CD4-positive, alpha-beta T cell (primary cell): ENCODE measurements at regions of chr1 and their contacts with region 1.

Region 1: GRCh38 chr1:44721485-44722361 is 9.2 kb downstream of the RNU5D-1 start:
- DNase-seq: peak; percentile 16 to 93 (median 48)
- ATAC-seq: peak; percentile 75
- H3K4me3 ChIP-seq: peak overlapping the region; percentile 6
- H3K4me3 Mint-ChIP-seq: peak overlapping the region; percentile 84
- H3K27ac ChIP-seq: peak overlapping the region; percentile 30 to 76
- H3K27ac Mint-ChIP-seq: peak overlapping the region; percentile 90
- H3K4me1 ChIP-seq: peaks cover 77% of the 10 kb centered on the region
- H3K4me1 Mint-ChIP-seq: peaks cover 68% of the 10 kb centered on the region
- H3K27me3 ChIP-seq: no peaks in the 10 kb centered on the region
- H3K27me3 Mint-ChIP-seq: no peaks in the 10 kb centered on the region
- CTCF ChIP-seq: no peak

Region 2: GRCh38 chr1:44696789-44697345 is 24.9 kb before region 1 on chr1:
- CTCF ChIA-PET with region 1: no interaction called
- POLR2A ChIA-PET with region 1: interaction called, 14 read pairs
- intact Hi-C with region 1: no loop called
- DNase-seq: peak in 12 of 14 experiments; percentile 8 to 65 (median 36)
- ATAC-seq: peak; percentile 98
- H3K4me3 ChIP-seq: peak overlapping the region; percentile 5
- H3K4me3 Mint-ChIP-seq: peak overlapping the region; percentile 70
- H3K27ac ChIP-seq: peak overlapping the region; percentile 36 to 74
- H3K27ac Mint-ChIP-seq: peak overlapping the region; percentile 84
- H3K4me1 ChIP-seq: peaks cover 16% of the 10 kb centered on the region
- H3K4me1 Mint-ChIP-seq: peaks cover 14% of the 10 kb centered on the region
- H3K27me3 ChIP-seq: no peaks in the 10 kb centered on the region
- H3K27me3 Mint-ChIP-seq: no peaks in the 10 kb centered on the region
- CTCF ChIP-seq: no peak

Region 3: GRCh38 chr1:44786138-44786840 is 64.6 kb after region 1 on chr1:
- CTCF ChIA-PET with region 1: interaction called, 3 read pairs
- POLR2A ChIA-PET with region 1: interaction called, 18 read pairs
- intact Hi-C with region 1: no loop called
- DNase-seq: peak; percentile 64 to 89 (median 74)
- ATAC-seq: peak; percentile 84
- H3K4me3 ChIP-seq: peak overlapping the region; percentile 58
- H3K4me3 Mint-ChIP-seq: peak overlapping the region; percentile 86
- H3K27ac ChIP-seq: peak overlapping the region; percentile 4 to 37
- H3K27ac Mint-ChIP-seq: peak overlapping the region; percentile 53
- H3K4me1 ChIP-seq: peaks cover 35% of the 10 kb centered on the region
- H3K4me1 Mint-ChIP-seq: peaks cover 31% of the 10 kb centered on the region
- H3K27me3 ChIP-seq: no peaks in the 10 kb centered on the region
- H3K27me3 Mint-ChIP-seq: no peaks in the 10 kb centered on the region
- CTCF ChIP-seq: peak; percentile 99

Region 4: GRCh38 chr1:44807262-44808062 is 85.7 kb after region 1 on chr1 and contains the start of gene DYNLT4:
- CTCF ChIA-PET with region 1: interaction called, 3 read pairs
- POLR2A ChIA-PET with region 1: interaction called, 65 read pairs
- intact Hi-C with region 1: no loop called
- DNase-seq: peak; percentile 82 to 98 (median 94)
- ATAC-seq: peak; percentile 56
- H3K4me3 ChIP-seq: peak within 1 kb of the TSS; percentile 12
- H3K4me3 Mint-ChIP-seq: peak within 1 kb of the TSS; percentile 83
- H3K27ac ChIP-seq: peak within 1 kb of the TSS; percentile 99 to 100
- H3K27ac Mint-ChIP-seq: peak within 1 kb of the TSS; percentile 99
- H3K4me1 ChIP-seq: peaks cover 100% of the 10 kb centered on the region
- H3K4me1 Mint-ChIP-seq: peaks cover 79% of the 10 kb centered on the region
- H3K27me3 ChIP-seq: no peaks in the 10 kb centered on the region
- H3K27me3 Mint-ChIP-seq: peaks cover 4% of the 10 kb centered on the region
- CTCF ChIP-seq: no peak
- total RNA-seq, gene DYNLT4: 1.8 to 2.1 TPM

Region 5: GRCh38 chr1:44812822-44813543 is 91.3 kb after region 1 on chr1:
- CTCF ChIA-PET with region 1: interaction called, 3 read pairs
- POLR2A ChIA-PET with region 1: interaction called, 65 read pairs
- intact Hi-C with region 1: no loop called
- DNase-seq: peak in 2 of 14 experiments; percentile 16 to 50
- ATAC-seq: no peak
- H3K4me3 ChIP-seq: peak overlapping the region; percentile 57
- H3K4me3 Mint-ChIP-seq: peak overlapping the region; percentile 83
- H3K27ac ChIP-seq: peak overlapping the region; percentile 55 to 74
- H3K27ac Mint-ChIP-seq: peak overlapping the region; percentile 99
- H3K4me1 ChIP-seq: peaks cover 68% of the 10 kb centered on the region
- H3K4me1 Mint-ChIP-seq: peaks cover 70% of the 10 kb centered on the region
- H3K27me3 ChIP-seq: no peaks in the 10 kb centered on the region
- H3K27me3 Mint-ChIP-seq: peaks cover 4% of the 10 kb centered on the region
- CTCF ChIP-seq: no peak